OCI-LY7 (cell line): ENCODE measurements at regions of chr11 and their contacts with region 1.

Region 1: GRCh38 chr11:82900277-82901164 is at the start of gene PRCP:
- DNase-seq: peak; percentile 89
- H3K4me3 ChIP-seq: peak within 1 kb of the TSS; percentile 79
- H3K27ac ChIP-seq: peak within 1 kb of the TSS; percentile 67
- H3K4me1 ChIP-seq: peaks cover 55% of the 10 kb centered on the region
- CTCF ChIP-seq: peak; percentile 48
- total RNA-seq, gene PRCP: 6.5 and 11.0 TPM in 2 replicates

Region 2: GRCh38 chr11:82873919-82874333 is 26.6 kb before region 1 on chr11:
- CTCF ChIA-PET with region 1: no interaction called
- POLR2A ChIA-PET with region 1: interaction called, 4 read pairs
- intact Hi-C with region 1: loop called (anchors 2 kb)
- DNase-seq: no peak
- H3K4me3 ChIP-seq: no peak overlapping the region
- H3K27ac ChIP-seq: no peak overlapping the region
- H3K4me1 ChIP-seq: no peaks in the 10 kb centered on the region
- CTCF ChIP-seq: no peak

Region 3: GRCh38 chr11:82889133-82890001 is 11.2 kb before region 1 on chr11:
- CTCF ChIA-PET with region 1: no interaction called
- POLR2A ChIA-PET with region 1: interaction called, 19 read pairs
- intact Hi-C with region 1: no loop called
- DNase-seq: peak; percentile 37
- H3K4me3 ChIP-seq: no peak overlapping the region
- H3K27ac ChIP-seq: no peak overlapping the region
- H3K4me1 ChIP-seq: peaks cover 14% of the 10 kb centered on the region
- CTCF ChIP-seq: no peak

Region 4: DNA sequence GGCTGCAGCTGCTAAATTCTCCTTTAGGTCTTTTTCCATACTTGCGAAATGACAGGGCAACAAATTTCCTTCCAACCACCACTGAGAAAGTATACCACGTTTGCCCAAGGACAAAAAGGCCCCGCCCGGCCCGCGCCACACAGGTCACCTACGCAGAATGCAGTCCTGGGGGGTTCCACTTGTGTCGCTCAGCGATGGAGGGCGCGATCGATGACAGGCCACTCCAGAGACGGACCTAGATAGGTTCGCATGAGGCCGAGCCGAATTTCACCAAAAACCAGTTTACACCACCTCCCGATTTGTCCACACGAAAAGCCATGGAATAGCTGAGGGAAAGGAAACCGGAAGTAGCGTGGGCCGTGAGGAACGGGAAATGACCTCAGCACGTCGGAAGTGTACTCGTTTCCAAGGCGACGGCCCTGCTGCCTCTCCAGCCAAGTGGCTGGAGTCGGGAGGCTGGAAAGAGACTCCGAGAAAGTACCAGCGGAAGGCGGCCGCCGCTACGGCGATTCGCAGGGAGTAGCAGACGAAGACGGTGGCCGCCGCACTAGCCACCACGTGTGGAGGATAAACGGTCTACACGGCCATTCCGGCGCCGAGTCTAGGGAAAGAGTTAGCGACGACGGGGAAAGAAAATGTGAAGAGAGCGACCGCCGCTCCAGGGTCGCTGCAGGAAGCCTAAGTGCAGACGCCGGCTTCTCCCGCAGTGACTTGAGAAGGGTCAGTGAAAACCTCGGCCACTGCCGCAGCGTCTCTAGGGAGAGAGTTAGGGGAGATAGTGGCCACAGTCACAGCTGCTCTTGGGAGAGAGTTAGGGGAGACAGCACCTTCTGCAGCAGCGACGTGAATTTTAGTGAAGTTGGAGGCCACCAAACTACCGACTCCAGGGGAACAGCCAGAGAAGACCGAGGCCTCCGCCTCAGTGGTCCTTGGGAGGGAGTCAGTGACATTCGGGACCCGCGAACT is 293.1 kb after region 1 on chr11 and contains the start of gene ANKRD42:
- CTCF ChIA-PET with region 1: no interaction called
- POLR2A ChIA-PET with region 1: interaction called, 4 read pairs
- intact Hi-C with region 1: loop called (anchors 10 kb)
- DNase-seq: peak; percentile 92
- H3K4me3 ChIP-seq: peak within 1 kb of the TSS; percentile 80
- H3K27ac ChIP-seq: peak within 1 kb of the TSS; percentile 34
- H3K4me1 ChIP-seq: peaks cover 18% of the 10 kb centered on the region
- CTCF ChIP-seq: peak; percentile 29; the same call in 1 of the 2 replicates
- total RNA-seq, gene ANKRD42: 1.1 and 2.2 TPM in 2 replicates

Region 5: DNA sequence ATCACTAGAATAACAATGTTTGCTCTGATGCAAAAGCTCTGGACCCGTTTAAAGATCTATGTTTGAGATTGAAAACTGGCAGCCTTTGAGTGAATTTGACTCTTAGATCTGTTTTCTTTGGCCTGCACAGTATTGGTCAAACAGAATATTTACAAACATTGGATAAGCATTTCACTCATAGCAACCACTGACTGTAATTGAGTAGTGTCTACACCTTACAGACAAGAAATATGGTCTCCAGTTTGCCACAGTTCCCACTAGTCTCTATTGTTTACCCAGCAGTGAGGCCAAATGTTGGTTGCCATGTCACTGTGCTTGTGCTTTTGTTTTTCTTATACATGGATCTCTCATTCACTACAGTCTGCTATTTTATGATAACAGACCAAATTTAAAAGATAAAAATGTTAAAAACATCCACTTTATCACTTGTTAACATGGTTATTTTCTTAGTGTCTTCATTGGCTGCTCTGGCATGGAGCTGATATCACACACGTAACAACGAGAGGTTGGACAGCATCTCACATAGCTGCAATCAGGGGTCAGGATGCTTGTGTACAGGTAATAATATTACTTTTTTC is 305.2 kb after region 1 on chr11:
- CTCF ChIA-PET with region 1: no interaction called
- POLR2A ChIA-PET with region 1: no interaction called
- intact Hi-C with region 1: no loop called
- DNase-seq: no peak
- H3K4me3 ChIP-seq: no peak overlapping the region
- H3K27ac ChIP-seq: no peak overlapping the region
- H3K4me1 ChIP-seq: no peaks in the 10 kb centered on the region
- CTCF ChIP-seq: no peak